Gastrocnemius medialis (tissue), 4 donors: ENCODE measurements at regions of chr19 and their contacts with region 1.

Region 1: DNA sequence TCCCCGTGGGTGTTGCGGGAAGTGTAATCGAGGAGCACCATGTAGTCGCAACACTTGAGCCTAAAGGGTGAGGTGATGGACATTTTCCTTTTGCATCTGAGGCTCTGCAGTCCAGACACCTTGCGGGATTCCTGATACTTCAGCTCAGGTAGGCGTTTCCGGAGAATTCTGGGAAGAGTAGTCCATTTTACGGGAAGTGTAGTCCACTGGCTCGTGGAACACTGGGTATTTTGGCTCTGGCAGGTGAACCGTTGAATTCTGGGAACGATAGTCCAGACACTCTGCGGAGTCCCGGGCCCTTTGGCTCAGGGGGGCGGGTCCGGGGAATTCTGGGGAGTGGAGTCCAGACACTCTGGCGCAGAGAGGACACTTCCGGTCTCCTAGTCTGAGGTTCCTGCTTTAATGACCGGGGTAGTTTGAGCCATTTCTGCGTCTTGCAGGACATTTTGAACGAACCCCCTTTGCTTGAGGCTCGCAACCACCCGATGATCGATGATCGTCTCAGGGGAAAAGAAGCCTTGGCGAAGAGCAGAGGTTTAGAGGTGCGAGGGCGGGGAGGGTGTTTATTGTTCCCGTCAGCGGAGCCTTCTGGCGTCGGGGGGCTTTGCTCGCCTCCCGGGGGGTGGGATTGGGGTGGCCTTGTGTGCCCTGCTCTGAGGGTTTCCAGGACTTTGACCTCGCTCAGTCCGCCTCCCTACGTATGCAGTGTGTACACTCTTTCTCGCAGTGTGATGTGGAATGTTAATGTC is at the start of gene ZNF223:
- DNase-seq: peak; percentile 94
- ATAC-seq: peak; percentile 100
- H3K4me3 ChIP-seq: peak within 1 kb of the TSS; percentile 72 to 84 (median 81)
- H3K27ac ChIP-seq: peak within 1 kb of the TSS; percentile 73 to 81 (median 78)
- H3K4me1 ChIP-seq: peaks cover 12 to 18% of the 10 kb centered on the region in 2 donors
- H3K27me3 ChIP-seq: peaks cover 0 to 25% (median 5%) of the 10 kb centered on the region in 3 donors
- CTCF ChIP-seq: no peak
- POLR2A ChIP-seq: no peak
- total RNA-seq, gene ZNF223: 0.56 to 3.0 (median 0.91) TPM in 3 of 4 donors, not detected in the other

Region 2: GRCh38 chr19:43983912-43984686 is 67.7 kb before region 1 on chr19 and contains the start of gene ZNF155:
- in situ Hi-C with region 1: no loop called
- intact Hi-C with region 1: loop called (anchors 5 kb)
- DNase-seq: peak; percentile 90 to 94
- ATAC-seq: peak; percentile 100
- H3K4me3 ChIP-seq: peak within 1 kb of the TSS; percentile 63 to 85 (median 76)
- H3K27ac ChIP-seq: peak within 1 kb of the TSS; percentile 77 to 83 (median 80)
- H3K4me1 ChIP-seq: peaks cover 0 to 5% of the 10 kb centered on the region in 2 donors
- H3K27me3 ChIP-seq: no peaks in the 10 kb centered on the region
- CTCF ChIP-seq: no peak
- POLR2A ChIP-seq: no peak
- total RNA-seq, gene ZNF155: 0.97 to 2.0 (median 1.6) TPM

Region 3: DNA sequence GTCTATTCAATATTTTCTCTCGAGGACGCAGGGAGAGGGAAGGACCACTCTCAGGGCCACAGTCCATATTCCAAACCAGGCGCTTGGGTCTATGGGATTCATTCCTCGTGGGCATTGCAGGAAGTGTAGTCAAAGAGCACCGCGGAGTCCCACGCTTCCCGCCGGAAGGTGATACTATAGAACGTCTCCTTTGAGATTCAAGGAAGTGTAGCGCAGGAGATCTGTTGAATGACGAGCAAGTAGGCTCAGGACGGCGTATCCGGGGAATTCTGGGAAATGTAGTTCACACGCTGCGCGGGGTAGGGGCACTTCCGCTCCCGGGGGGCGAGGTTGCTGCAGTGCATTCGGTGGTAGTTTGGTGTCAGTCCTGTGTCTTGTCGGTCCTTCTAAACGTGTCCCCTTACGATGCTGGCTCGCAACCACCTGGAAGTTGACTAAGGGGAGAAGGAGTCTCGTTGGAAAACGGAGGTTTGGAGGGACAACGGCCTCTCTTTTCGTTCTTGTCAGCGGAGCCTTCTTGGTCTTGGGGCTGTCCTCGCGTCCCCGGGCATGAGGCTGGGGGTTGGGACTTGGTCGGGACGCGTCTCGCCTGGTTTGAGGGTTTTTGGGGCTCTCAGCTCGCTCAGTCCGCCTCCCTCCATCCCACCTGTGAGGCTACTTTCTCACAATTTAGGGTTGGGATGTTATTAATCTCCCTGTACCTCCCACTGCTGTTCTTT is 20.2 kb after region 1 on chr19 and contains the start of gene ZNF284:
- in situ Hi-C with region 1: no loop called
- intact Hi-C with region 1: loop called (anchors 1 kb)
- DNase-seq: peak; percentile 82 to 87
- ATAC-seq: peak; percentile 100
- H3K4me3 ChIP-seq: peak within 1 kb of the TSS; percentile 60 to 83 (median 77)
- H3K27ac ChIP-seq: peak within 1 kb of the TSS; percentile 56 to 79 (median 59)
- H3K4me1 ChIP-seq: peaks cover 10 to 13% of the 10 kb centered on the region in 2 donors
- H3K27me3 ChIP-seq: no peaks in the 10 kb centered on the region
- CTCF ChIP-seq: no peak
- POLR2A ChIP-seq: peak in 1 of 2 donors; percentile 20
- total RNA-seq, gene ZNF284: 0.38 to 1.3 (median 0.63) TPM

Region 4: DNA sequence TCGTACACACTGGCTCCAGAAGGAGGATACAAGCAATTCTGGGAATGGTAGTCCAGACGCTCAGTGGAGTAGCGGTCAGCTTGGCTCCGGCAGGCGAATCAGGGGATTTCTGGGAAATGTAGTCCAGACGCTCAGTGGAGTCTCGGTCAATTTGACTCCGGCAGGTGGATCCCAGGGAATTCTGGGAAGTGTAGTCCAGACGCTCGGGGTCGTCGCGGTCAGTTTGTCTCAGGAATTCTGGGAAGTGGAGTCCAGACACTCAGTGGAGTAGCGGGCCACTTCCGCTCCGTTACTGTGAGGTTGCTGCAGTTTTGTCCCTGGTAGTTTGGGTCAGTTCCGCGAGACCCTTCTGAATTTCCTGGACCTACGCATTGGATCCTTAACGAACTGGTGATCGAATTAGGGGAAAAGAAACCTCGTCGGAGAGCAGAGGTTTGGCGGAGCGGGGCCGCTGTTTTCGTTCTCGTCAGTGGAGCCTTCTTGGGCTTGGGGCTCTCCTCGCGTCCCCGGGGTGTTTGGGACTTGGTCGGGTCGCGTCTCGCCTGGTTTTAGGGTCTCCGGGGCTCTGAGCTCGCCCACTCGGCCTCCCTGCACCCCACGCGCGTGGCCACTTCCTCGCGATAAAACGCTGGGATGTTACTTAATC is 61.4 kb after region 1 on chr19 and contains the start of gene ZNF225:
- in situ Hi-C with region 1: no loop called
- intact Hi-C with region 1: loop called (anchors 1 kb)
- DNase-seq: peak; percentile 97 to 98
- ATAC-seq: peak; percentile 100
- H3K4me3 ChIP-seq: peak within 1 kb of the TSS; percentile 67 to 92 (median 86)
- H3K27ac ChIP-seq: peak within 1 kb of the TSS; percentile 73 to 86 (median 84)
- H3K4me1 ChIP-seq: peaks cover 14 to 18% of the 10 kb centered on the region in 2 donors
- H3K27me3 ChIP-seq: no peaks in the 10 kb centered on the region
- CTCF ChIP-seq: peak in 1 of 5 experiments; percentile 21
- POLR2A ChIP-seq: peak in 1 of 2 donors; percentile 17
- total RNA-seq, gene ZNF225: 0.75 to 1.4 (median 1.1) TPM

Region 5: GRCh38 chr19:44164673-44165512 is 113.1 kb after region 1 on chr19 and contains the start of gene ZNF226:
- in situ Hi-C with region 1: no loop called
- intact Hi-C with region 1: loop called (anchors 2 kb)
- DNase-seq: peak; percentile 94
- ATAC-seq: peak; percentile 100
- H3K4me3 ChIP-seq: peak within 1 kb of the TSS; percentile 86 to 95 (median 88)
- H3K27ac ChIP-seq: peak within 1 kb of the TSS; percentile 79 to 86 (median 84)
- H3K4me1 ChIP-seq: peaks cover 7 to 13% of the 10 kb centered on the region in 2 donors
- H3K27me3 ChIP-seq: no peaks in the 10 kb centered on the region
- CTCF ChIP-seq: no peak
- POLR2A ChIP-seq: peak in 1 of 2 donors; percentile 53
- total RNA-seq, gene ZNF226: 3.2 to 6.9 (median 3.8) TPM